ENCODE measurements at regions of chr20 and their contacts with region 1.

Region 1: GRCh38 chr20:38893565-38894090 is 32.6 kb upstream of the FAM83D start:
- DNase-seq: peak; percentile 81 to 91
- ATAC-seq: peak; percentile 88 to 92 (median 90)
- H3K4me3 ChIP-seq: no peak overlapping the region
- H3K4me3 Mint-ChIP-seq: peak overlapping the region; percentile 55
- H3K27ac ChIP-seq: peak overlapping the region; percentile 75
- H3K27ac Mint-ChIP-seq: peak overlapping the region; percentile 88 to 94
- H3K4me1 ChIP-seq: peaks cover 32% of the 10 kb centered on the region
- H3K4me1 Mint-ChIP-seq: peaks cover 36 to 44% of the 10 kb centered on the region in 2 donors
- H3K27me3 ChIP-seq: no peaks in the 10 kb centered on the region
- H3K27me3 Mint-ChIP-seq: no peaks in the 10 kb centered on the region
- CTCF ChIP-seq: peak; percentile 87

Region 2: DNA sequence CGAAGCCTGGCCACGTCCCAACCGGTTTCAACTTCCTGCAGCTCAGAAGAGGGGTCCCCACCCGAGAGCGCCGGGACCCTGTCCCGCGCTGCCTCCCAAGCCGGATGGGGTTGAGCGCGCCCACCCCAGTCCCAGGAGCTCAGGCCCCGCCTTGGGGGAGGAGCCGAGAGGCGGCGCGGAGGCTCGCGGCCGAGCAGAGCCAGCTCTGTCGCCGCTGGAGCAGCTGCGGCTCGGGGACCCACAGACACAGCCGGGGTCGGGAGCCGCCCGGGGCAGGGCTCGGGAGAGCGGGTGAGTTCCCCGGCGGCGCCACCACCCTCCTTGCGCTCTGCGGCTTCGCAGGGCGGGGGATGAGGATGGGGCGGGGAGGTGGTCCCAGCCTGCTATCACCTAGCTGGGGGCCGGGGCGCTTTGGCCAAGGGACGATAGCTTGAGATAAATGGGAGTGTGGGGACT is 88.1 kb before region 1 on chr20 and contains the start of gene PPP1R16B:
- intact Hi-C with region 1: loop called (anchors 1 kb)
- DNase-seq: peak; percentile 77 to 88
- ATAC-seq: peak; percentile 73 to 85 (median 74)
- H3K4me3 ChIP-seq: peak within 1 kb of the TSS; percentile 96
- H3K4me3 Mint-ChIP-seq: peak within 1 kb of the TSS; percentile 95
- H3K27ac ChIP-seq: peak within 1 kb of the TSS; percentile 99
- H3K27ac Mint-ChIP-seq: peak within 1 kb of the TSS; percentile 86 to 97
- H3K4me1 ChIP-seq: peaks cover 54% of the 10 kb centered on the region
- H3K4me1 Mint-ChIP-seq: peaks cover 56% of the 10 kb centered on the region in 2 donors
- H3K27me3 ChIP-seq: no peaks in the 10 kb centered on the region
- H3K27me3 Mint-ChIP-seq: no peaks in the 10 kb centered on the region
- CTCF ChIP-seq: no peak
- total RNA-seq, gene PPP1R16B: 52.0 to 62.3 (median 53.7) TPM

Region 3: DNA sequence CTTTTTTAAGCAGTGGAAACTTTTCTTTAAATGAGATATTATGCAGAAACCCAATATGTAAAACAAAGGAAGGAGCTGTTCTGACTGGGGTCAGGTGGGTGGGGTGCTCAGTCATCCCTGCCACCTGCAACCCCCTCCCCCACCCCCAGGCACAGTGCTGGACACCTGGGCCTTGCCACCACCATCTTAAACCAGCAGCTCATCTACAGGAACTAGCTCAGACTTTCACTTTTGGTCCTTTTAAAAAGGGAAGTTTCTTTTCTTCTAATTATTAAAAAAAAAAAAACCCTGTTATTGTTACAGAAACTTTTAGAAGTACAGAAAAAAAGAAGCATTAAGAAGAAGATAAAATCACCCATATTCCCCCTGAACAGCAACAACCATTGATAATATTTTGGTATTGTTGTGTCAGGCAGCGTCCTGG is 51.1 kb before region 1 on chr20:
- intact Hi-C with region 1: loop called (anchors 5 kb)
- DNase-seq: peak in 1 of 2 donors; percentile 69
- ATAC-seq: peak; percentile 17 to 43 (median 37)
- H3K4me3 ChIP-seq: no peak overlapping the region
- H3K4me3 Mint-ChIP-seq: peak overlapping the region; percentile 70
- H3K27ac ChIP-seq: peak overlapping the region; percentile 73
- H3K27ac Mint-ChIP-seq: peak overlapping the region; percentile 89 to 92
- H3K4me1 ChIP-seq: peaks cover 40% of the 10 kb centered on the region
- H3K4me1 Mint-ChIP-seq: peaks cover 64 to 67% of the 10 kb centered on the region in 2 donors
- H3K27me3 ChIP-seq: no peaks in the 10 kb centered on the region
- H3K27me3 Mint-ChIP-seq: no peaks in the 10 kb centered on the region
- CTCF ChIP-seq: no peak

Region 4: GRCh38 chr20:38863024-38863851 is 30.4 kb before region 1 on chr20:
- intact Hi-C with region 1: loop called (anchors 5 kb)
- DNase-seq: peak; percentile 34 to 86
- ATAC-seq: peak; percentile 51 to 75 (median 69)
- H3K4me3 ChIP-seq: no peak overlapping the region
- H3K4me3 Mint-ChIP-seq: no peak overlapping the region
- H3K27ac ChIP-seq: peak overlapping the region; percentile 77
- H3K27ac Mint-ChIP-seq: peak overlapping the region; percentile 74 to 78
- H3K4me1 ChIP-seq: peaks cover 82% of the 10 kb centered on the region
- H3K4me1 Mint-ChIP-seq: peaks cover 52 to 72% of the 10 kb centered on the region in 2 donors
- H3K27me3 ChIP-seq: no peaks in the 10 kb centered on the region
- H3K27me3 Mint-ChIP-seq: no peaks in the 10 kb centered on the region
- CTCF ChIP-seq: no peak

Measured in natural killer cell (primary cell).